Heart right ventricle (tissue), 16 donors: ENCODE measurements at regions of chr4 and their contacts with region 1.

Region 1: DNA sequence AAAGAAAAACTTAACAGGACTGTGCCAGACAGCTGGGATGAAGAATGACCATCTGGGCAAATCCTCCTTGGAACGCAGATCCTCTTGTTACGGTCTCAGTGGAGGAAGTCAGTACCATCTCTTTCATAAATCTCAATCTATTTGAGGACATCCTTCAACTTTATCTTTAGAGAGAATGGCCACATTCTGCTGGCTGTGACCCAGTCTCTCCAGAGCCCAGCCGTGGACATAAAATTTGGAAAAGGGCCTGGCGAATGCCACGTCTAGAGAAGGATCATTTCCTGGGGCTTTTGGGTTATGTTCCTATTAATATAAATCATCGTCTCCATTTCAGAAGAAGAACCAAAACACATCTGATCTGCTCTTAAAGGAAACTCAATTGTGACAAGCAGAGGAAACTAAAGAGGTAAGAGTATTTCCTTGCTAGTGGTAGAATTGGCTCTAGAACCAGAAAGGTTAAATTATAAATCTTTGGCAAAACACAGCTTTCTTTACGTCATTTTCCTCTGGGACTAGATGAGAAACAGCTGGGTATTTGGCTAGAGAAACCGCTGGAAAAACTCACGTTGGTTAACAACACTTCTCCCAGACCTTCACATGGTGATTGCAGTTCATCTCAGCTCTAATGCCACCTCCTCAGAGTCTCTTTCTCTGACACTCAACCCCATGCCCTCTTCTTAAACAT is 164.7 kb downstream of the CHIC2 start:
- DNase-seq: no peak
- ATAC-seq: peak in 6 of 8 donors; percentile 51 to 75 (median 68)
- H3K4me3 ChIP-seq: peak overlapping the region in 1 of 10 donors; percentile 1
- H3K27ac ChIP-seq: peak overlapping the region in 5 of 10 donors; percentile 19 to 69 (median 40)
- H3K4me1 ChIP-seq: peaks cover 0 to 16% (median 8%) of the 10 kb centered on the region in 9 donors
- H3K27me3 ChIP-seq: peaks cover 0 to 23% (median 12%) of the 10 kb centered on the region in 7 donors
- CTCF ChIP-seq: no peak

Region 2: DNA sequence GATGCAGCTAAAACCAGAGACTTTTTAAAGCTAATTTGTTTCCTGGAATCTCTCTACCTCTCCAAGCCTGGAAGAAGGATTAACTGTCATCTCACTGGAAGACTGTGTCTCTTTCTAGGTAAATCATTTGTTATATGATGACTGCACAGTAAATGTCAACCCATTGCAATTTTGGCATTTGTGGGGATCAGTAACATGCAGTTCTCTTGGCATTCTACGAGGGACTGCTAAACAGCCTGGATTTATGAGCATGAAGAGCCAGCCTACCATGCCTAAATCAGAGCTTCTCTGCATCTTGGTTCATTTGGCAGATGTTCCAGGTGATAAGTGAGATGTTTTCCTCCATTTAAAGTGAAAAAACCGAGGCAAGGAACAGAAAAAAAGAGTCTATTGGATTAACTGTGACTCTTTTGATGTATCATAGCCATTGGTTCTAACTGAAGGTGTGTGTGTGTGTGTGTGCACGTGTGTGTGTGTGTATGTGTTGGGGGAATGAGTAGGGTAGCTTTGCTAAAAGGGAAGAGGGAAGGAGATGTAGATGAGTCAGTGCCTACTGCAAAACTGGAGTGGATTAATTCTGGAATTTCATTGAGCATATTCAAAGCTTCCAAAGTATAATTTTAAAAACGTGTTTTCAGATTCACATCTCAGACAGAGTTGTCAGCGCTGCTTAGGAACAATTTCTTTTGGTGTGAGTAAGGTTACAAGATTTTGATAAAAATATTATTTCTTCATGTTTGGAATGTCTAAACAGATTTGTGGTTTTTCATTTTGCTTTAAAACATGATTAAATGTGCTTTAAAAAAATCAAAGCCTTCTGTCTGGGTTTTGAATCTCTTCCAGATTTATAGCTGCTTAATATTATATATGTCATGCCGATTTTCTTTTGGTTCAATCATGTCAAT is 185.2 kb before region 1 on chr4:
- intact Hi-C with region 1: loop called in 4 of 10 experiments (anchors 5 to 10 kb)
- DNase-seq: no peak
- ATAC-seq: no peak
- H3K4me3 ChIP-seq: no peak overlapping the region
- H3K27ac ChIP-seq: peak overlapping the region in 1 of 10 donors; percentile 22
- H3K4me1 ChIP-seq: peaks cover 0 to 13% (median 0%) of the 10 kb centered on the region in 9 donors
- H3K27me3 ChIP-seq: peaks cover 0 to 4% (median 0%) of the 10 kb centered on the region in 7 donors
- CTCF ChIP-seq: no peak

Region 3: DNA sequence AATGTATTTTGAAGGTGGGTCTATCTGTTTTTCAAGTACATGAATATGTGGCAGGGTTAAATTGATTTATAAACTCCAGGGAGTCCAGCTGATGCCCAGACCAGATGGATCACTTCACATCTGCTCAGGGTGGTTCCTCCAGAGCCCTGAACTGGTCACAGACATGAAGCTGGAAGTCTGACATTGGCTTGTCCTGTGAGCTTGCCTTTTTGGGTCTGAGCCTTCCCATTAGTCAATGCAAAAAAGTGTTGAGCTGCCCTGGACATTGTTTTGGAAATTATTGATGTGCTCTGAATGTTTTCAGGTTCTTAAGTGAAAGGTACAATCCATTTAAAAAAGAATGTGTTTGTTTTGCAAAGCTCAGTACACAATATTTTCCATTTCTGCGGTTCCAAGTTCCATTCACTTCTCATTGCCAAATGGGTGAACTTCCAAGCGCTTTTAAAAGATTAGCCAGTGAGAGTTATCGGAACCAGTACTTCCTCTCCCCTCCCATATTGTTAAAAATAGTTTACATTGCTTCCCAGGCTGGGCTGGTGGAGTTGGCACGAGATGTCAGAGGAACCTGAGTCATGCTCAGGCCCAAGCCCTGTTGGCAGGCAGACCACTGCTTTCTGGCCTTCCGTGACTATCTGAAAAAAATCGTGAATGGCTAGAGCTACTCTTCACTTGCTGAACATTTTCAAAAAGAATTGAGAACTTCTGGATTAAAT is 381.5 kb after region 1 on chr4:
- intact Hi-C with region 1: no loop called
- DNase-seq: peak; percentile 75 to 87
- ATAC-seq: peak; percentile 92 to 98 (median 96)
- H3K4me3 ChIP-seq: no peak overlapping the region
- H3K27ac ChIP-seq: peak overlapping the region; percentile 54 to 85 (median 78)
- H3K4me1 ChIP-seq: peaks cover 6 to 53% (median 37%) of the 10 kb centered on the region in 9 donors
- H3K27me3 ChIP-seq: no peaks in the 10 kb centered on the region
- CTCF ChIP-seq: no peak